Psoas muscle (tissue), 8 donors: ENCODE measurements at regions of chr15 and their contacts with region 1.

Region 1: GRCh38 chr15:98085003-98085639 is 124.6 kb downstream of the ARRDC4 start:
- DNase-seq: no peak
- ATAC-seq: no peak
- H3K4me3 ChIP-seq: no peak overlapping the region
- H3K27ac ChIP-seq: no peak overlapping the region
- H3K4me1 ChIP-seq: no peaks in the 10 kb centered on the region
- H3K27me3 ChIP-seq: no peaks in the 10 kb centered on the region
- CTCF ChIP-seq: peak; percentile 80

Region 2: DNA sequence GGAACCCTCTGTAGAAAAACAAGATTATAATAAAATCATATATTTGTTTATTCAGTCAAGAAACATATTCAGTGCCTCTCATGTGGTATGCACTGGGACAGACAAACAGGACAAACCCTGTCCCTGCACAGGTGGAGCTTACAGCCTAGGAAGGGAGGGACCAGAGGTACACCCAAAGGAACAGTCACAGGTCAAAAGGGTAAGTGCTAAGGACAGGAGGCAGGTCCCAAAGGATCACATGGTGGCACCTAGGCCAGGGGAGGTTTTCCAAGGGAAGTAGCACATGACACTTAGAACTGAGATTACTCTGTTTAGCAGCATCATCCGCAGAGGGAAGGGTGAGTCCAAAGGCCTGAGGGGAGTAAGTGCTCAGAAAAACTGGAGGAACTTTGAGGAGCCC is 379.1 kb before region 1 on chr15:
- intact Hi-C with region 1: no loop called
- DNase-seq: no peak
- ATAC-seq: no peak
- H3K4me3 ChIP-seq: no peak overlapping the region
- H3K27ac ChIP-seq: no peak overlapping the region
- H3K4me1 ChIP-seq: no peaks in the 10 kb centered on the region
- H3K27me3 ChIP-seq: no peaks in the 10 kb centered on the region
- CTCF ChIP-seq: no peak

Region 3: GRCh38 chr15:97995881-97996603 is 89.1 kb before region 1 on chr15:
- intact Hi-C with region 1: loop called in 1 of 2 experiments (anchors 5 kb)
- DNase-seq: no peak
- ATAC-seq: no peak
- H3K4me3 ChIP-seq: no peak overlapping the region
- H3K27ac ChIP-seq: no peak overlapping the region
- H3K4me1 ChIP-seq: peaks cover 11% of the 10 kb centered on the region
- H3K27me3 ChIP-seq: no peaks in the 10 kb centered on the region
- CTCF ChIP-seq: peak; percentile 24

Region 4: GRCh38 chr15:98043160-98044014 is 41.7 kb before region 1 on chr15:
- intact Hi-C with region 1: no loop called
- DNase-seq: no peak
- ATAC-seq: peak in 1 of 4 donors; percentile 62
- H3K4me3 ChIP-seq: no peak overlapping the region
- H3K27ac ChIP-seq: no peak overlapping the region
- H3K4me1 ChIP-seq: no peaks in the 10 kb centered on the region
- H3K27me3 ChIP-seq: no peaks in the 10 kb centered on the region
- CTCF ChIP-seq: peak; percentile 14

Region 5: GRCh38 chr15:98142572-98142971 is 57.5 kb after region 1 on chr15:
- intact Hi-C with region 1: no loop called
- DNase-seq: no peak
- ATAC-seq: no peak
- H3K4me3 ChIP-seq: no peak overlapping the region
- H3K27ac ChIP-seq: no peak overlapping the region
- H3K4me1 ChIP-seq: no peaks in the 10 kb centered on the region
- H3K27me3 ChIP-seq: peaks cover 0 to 2% (median 0%) of the 10 kb centered on the region in 3 donors
- CTCF ChIP-seq: no peak

Region 6: DNA sequence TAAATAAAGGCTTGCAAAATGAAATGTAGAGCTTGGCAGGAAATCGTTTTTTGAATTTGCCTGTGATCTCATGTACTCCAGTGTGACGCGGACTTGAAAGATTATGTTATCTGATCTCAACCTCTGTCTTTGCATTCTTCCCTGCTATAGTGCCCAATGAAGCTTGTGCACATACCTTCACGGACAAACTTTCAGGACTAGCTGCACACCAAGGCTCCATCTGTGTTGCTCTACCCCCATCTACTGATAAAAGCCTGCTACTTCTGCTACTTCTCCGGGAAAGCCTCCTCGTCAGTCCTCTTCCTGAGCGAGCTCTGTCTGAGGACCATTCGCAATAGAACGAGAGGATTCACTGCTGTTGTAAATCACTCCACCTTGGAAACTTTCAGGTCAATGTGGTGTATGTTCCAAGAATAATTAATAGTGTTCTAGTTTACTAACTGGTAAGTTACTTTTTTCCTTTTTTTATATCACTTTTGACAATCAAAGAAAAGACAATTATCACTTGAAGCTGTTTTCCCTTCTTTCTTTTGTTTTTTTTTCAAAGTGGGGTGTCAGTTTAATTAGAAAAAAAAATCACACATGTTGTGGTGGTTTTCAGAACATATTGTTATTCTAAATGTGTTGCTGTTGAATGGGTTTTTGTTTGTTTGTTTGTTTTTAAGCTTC is 92.9 kb after region 1 on chr15:
- intact Hi-C with region 1: loop called in 1 of 2 experiments (anchors 5 kb)
- DNase-seq: no peak
- ATAC-seq: peak in 3 of 4 donors; percentile 68 to 73 (median 71)
- H3K4me3 ChIP-seq: no peak overlapping the region
- H3K27ac ChIP-seq: no peak overlapping the region
- H3K4me1 ChIP-seq: no peaks in the 10 kb centered on the region
- H3K27me3 ChIP-seq: peaks cover 2 to 18% (median 3%) of the 10 kb centered on the region in 3 donors
- CTCF ChIP-seq: peak; percentile 55